Gastrocnemius medialis (tissue), 4 donors: ENCODE measurements at regions of chr17 and their contacts with region 1.

Region 1: DNA sequence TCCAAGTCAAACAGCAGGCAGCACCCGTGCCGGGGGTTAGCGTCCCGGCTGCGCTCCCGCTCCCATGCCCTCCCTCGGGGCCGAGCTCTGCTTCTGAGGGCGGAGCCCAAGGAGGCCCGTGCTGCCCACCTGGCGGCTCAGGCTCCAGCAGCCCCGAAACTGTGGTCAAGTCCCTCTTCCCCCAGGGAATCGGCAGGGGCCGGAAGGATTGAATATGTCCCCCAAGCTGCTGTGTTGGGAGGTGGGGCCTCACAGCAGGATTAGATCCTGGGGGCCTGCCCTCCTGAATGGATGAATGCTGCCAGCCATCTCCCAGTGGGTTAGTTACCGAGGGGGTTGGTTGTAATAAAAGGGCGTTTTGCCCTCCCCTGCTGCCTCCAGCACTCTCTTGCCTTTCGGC is 33.9 kb downstream of the MAP2K3 start:
- DNase-seq: no peak
- ATAC-seq: no peak
- H3K4me3 ChIP-seq: no peak overlapping the region
- H3K27ac ChIP-seq: no peak overlapping the region
- H3K4me1 ChIP-seq: peaks cover 0 to 5% of the 10 kb centered on the region in 2 donors
- H3K27me3 ChIP-seq: no peaks in the 10 kb centered on the region
- CTCF ChIP-seq: no peak
- POLR2A ChIP-seq: no peak

Region 2: DNA sequence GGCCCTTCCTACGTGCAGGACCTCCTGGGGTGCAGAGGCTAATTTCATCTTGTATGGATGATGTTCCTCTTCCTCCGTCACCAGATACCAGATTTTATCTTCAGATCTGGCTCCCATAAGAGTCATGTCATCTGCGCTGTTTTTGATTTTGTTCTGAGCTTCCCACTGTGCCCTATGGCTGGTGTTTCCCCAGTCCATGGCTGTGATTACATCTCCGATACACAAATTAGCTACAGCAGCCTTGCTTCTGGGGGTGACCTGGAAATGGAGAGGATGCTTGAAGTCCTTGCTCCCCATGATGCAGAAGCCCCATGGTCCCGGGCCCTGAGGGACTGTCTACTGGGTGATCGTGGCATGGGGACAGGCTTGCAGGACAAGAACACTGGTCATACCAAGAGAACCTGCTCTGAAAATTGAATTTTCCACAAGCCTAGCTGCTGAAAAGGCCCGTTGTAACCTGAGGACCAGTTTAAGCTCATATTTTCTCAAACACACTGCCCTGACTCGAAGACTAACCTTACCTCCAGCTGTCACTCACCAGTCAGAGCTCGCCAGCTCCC is 126.7 kb after region 1 on chr17:
- in situ Hi-C with region 1: loop called in 2 of 4 experiments (anchors 10 kb)
- intact Hi-C with region 1: no loop called
- DNase-seq: no peak
- ATAC-seq: no peak
- H3K4me3 ChIP-seq: no peak overlapping the region
- H3K27ac ChIP-seq: no peak overlapping the region
- H3K4me1 ChIP-seq: no peaks in the 10 kb centered on the region
- H3K27me3 ChIP-seq: no peaks in the 10 kb centered on the region
- CTCF ChIP-seq: no peak
- POLR2A ChIP-seq: no peak

Region 3: DNA sequence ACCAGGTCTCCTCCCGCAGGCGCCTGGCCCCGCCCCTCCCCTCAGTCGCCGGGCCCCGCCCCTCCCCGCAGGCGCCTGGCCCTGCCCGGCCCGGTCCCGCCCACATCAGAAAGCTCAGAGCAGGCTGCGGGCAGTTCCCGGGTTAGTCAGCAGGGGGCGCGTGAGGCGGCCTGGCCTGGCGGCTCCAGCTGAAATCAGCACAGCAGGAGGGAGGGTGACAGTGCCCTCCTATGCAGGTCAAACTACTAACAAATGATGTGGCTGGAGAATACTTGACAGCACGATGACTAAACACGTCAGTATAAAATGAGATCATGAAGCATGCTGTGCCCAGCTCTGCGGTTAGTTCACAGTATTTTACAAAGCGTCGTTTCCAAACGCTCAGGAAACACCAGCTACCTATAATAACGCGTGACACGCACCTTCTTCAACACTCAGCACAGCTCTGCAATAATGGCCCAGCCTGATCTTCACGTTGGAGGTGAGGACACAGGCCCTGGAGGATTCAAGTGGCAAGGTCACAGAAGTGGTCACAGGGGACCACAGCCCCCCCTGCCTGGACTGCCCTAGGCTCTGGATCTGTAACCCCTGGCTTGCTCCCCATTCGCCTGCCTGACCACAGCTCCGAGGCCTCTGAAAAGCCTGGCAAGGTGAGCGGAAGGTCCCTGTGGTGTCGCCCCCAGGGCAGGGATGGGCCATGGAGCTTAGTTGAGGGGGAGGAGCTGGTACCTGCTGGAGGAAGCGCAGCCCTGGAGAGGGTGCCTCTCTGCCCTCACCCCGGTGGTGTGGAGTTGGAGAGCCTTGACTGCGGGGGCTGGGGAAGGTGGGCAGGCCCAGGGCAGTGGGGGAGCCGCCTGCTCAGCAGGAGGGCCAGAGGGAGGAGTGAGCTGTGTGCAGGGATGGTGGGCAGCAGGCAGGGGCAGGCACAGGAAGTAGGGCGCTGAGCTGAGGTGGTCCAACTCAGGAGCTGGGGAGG is 138.9 kb after region 1 on chr17:
- in situ Hi-C with region 1: loop called in 1 of 4 experiments (anchors 10 kb)
- intact Hi-C with region 1: loop called (anchors 1 kb)
- DNase-seq: peak; percentile 76 to 89
- ATAC-seq: peak; percentile 89 to 92
- H3K4me3 ChIP-seq: no peak overlapping the region
- H3K27ac ChIP-seq: peak overlapping the region in 1 of 4 donors; percentile 35
- H3K4me1 ChIP-seq: peaks cover 4 to 10% of the 10 kb centered on the region in 2 donors
- H3K27me3 ChIP-seq: no peaks in the 10 kb centered on the region
- CTCF ChIP-seq: peak; percentile 78 to 99 (median 93)
- POLR2A ChIP-seq: no peak

Region 4: GRCh38 chr17:22217135-22217534 is 898.7 kb after region 1 on chr17:
- in situ Hi-C with region 1: no loop called
- intact Hi-C with region 1: no loop called
- DNase-seq: no peak
- ATAC-seq: no peak
- H3K4me3 ChIP-seq: no peak overlapping the region
- H3K27ac ChIP-seq: no peak overlapping the region
- H3K4me1 ChIP-seq: no peaks in the 10 kb centered on the region
- H3K27me3 ChIP-seq: no peaks in the 10 kb centered on the region
- CTCF ChIP-seq: no peak
- POLR2A ChIP-seq: no peak